PC-3 (cell line): ENCODE measurements at regions of chr2 and their contacts with region 1.

Region 1: GRCh38 chr2:101160454-101160853 is 9.3 kb upstream of the TBC1D8 start:
- DNase-seq: peak; percentile 96
- ATAC-seq: peak; percentile 95
- H3K4me3 ChIP-seq: no peak overlapping the region
- H3K27ac ChIP-seq: 0 out of 2 replicates have a peak overlapping the region, but pooled peaks have one; percentile 19
- H3K4me1 ChIP-seq: peaks cover 13% of the 10 kb centered on the region
- H3K27me3 ChIP-seq: no peaks in the 10 kb centered on the region
- CTCF ChIP-seq: no peak

Region 2: GRCh38 chr2:101047075-101047766 is 113.2 kb before region 1 on chr2:
- CTCF ChIA-PET with region 1: no interaction called
- POLR2A ChIA-PET with region 1: interaction called, 32 read pairs
- intact Hi-C with region 1: no loop called
- DNase-seq: peak; percentile 97
- ATAC-seq: peak; percentile 98
- H3K4me3 ChIP-seq: no peak overlapping the region
- H3K27ac ChIP-seq: peak overlapping the region; percentile 81
- H3K4me1 ChIP-seq: peaks cover 18% of the 10 kb centered on the region
- H3K27me3 ChIP-seq: no peaks in the 10 kb centered on the region
- CTCF ChIP-seq: no peak

Region 3: DNA sequence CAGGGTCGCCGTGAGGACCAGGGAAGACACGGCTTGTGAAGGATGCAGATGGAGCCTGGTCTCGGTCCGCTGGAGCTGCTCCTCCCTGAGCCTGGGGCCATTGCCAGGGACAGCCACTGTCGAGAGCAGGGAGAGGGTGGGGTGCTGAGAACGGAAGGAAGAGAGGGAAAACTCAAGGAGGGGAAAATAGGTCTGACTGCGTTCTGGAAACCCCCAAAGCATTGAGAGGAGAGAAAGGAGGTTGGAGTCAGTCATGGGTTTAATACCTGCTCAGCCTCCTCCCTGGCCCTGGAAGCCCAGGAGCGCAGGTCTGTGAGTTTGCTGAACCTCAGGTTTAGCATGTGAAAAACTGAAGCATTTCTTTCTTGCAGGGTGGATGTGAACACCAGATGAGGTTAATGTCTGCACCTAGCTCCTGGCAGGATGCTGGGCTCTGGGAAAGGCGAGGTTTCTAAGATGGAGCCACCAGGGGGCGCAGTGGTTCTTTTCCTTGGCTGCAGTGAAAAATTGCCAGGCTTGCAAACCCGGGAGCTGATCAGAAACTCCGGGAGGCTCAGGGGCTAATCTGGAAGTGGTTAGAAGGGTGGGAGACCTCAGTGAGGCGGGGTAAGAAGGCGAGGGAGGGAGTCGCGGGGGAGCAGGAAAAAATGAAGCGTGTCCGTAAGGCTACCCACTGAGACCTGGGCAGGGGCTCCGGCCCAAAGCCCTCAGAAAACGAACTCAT is 181.6 kb after region 1 on chr2:
- CTCF ChIA-PET with region 1: no interaction called
- POLR2A ChIA-PET with region 1: no interaction called
- intact Hi-C with region 1: no loop called
- DNase-seq: peak; percentile 90
- ATAC-seq: peak; percentile 87
- H3K4me3 ChIP-seq: no peak overlapping the region; the same call in 1 of the 2 replicates
- H3K27ac ChIP-seq: peak overlapping the region; percentile 35
- H3K4me1 ChIP-seq: peaks cover 42% of the 10 kb centered on the region
- H3K27me3 ChIP-seq: no peaks in the 10 kb centered on the region
- CTCF ChIP-seq: peak; percentile 92